Mucosa of descending colon (tissue), 3 donors: ENCODE measurements at regions of chr3 and their contacts with region 1.

Region 1: GRCh38 chr3:128665362-128666038 is 14.9 kb upstream of the RPN1 start:
- DNase-seq: no peak
- ATAC-seq: no peak
- H3K4me3 ChIP-seq: no peak overlapping the region
- H3K4me1 ChIP-seq: no peaks in the 10 kb centered on the region
- CTCF ChIP-seq: no peak

Region 2: DNA sequence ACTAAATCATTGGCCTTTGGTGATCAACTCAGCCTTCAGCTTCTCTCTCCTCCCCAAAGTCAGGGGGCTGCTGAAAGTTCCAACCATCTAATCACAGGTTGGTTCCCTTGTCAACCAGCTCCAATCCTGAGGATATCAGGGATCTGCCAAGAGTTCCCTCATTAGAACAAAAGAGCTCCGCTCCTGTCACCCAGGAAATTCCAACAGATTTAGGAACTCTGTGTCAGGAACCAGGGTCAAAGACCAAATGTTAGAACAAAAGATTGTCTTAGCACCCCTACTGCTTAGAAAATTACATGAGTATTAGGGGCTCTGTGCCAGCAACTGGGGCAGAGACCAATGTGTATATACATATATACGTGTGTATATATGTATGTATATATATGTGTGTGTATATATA is 28.2 kb after region 1 on chr3:
- intact Hi-C with region 1: loop called in 1 of 2 experiments (anchors 2 kb)
- DNase-seq: no peak
- ATAC-seq: no peak
- H3K4me3 ChIP-seq: no peak overlapping the region
- H3K4me1 ChIP-seq: peaks cover 4% of the 10 kb centered on the region
- CTCF ChIP-seq: no peak